ENCODE measurements at regions of chr17 and their contacts with region 1.

Region 1: DNA sequence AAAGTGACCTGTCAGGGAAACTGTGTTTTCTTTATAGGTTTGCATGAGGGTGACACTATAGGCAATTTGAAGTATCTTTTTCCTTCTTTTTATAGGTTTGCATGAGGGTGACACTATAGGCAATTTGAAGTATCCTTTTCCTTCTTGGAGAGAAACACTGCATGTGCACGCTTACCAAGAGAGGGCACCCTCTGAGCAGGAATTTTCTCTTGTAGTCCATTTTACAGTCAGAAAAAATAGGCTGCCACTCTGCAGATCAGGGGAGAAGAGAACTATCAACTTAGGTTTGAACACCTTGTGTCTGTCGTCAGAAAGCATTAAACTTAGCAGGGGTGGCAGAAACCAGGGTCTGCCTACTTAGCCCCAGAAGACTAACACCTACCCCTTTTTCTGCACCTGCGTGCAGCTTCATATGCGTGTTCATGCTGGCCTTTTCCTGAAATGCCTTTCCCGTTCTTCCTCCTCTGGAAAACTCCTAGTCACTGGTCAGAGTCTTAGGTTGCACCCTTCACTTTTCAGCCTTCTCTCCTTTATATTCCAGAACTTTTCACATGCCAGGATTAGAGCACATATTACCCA is 16.4 kb upstream of the SMIM36 start:
- DNase-seq: peak in 1 of 2 experiments; percentile 57
- H3K4me3 ChIP-seq: no peak overlapping the region
- H3K4me3 Mint-ChIP-seq: no peak overlapping the region
- H3K27ac Mint-ChIP-seq: no peak overlapping the region
- H3K4me1 ChIP-seq: 0 out of 2 replicates have a peak, but pooled peaks cover 5% of the 10 kb centered on the region
- H3K4me1 Mint-ChIP-seq: no peaks in the 10 kb centered on the region
- H3K27me3 ChIP-seq: no peaks in the 10 kb centered on the region; the same call in 1 of the 2 replicates
- H3K27me3 Mint-ChIP-seq: peaks cover 5% of the 10 kb centered on the region
- CTCF ChIP-seq: peak; percentile 43 to 68

Region 2: DNA sequence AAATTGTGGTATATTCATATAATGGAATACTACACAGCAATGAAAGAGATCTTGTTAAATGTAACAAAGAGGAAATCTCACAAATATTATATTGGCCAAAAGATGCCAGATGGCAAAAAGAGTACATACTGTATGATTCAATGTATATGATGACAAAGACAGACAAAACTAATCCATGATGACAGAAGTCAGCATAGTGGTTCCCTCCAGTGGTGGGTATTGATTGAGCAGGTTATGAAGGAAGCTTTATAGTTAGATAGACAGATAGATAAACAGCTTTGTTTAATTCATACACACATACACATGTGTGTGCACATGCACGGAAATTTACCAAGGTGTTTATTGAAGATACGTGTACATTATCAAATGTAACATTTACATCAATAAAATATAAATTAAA is 58.0 kb after region 1 on chr17:
- CTCF ChIA-PET with region 1: no interaction called
- POLR2A ChIA-PET with region 1: no interaction called
- intact Hi-C with region 1: loop called (anchors 1 kb)
- DNase-seq: no peak
- H3K4me3 ChIP-seq: no peak overlapping the region
- H3K4me3 Mint-ChIP-seq: no peak overlapping the region
- H3K27ac Mint-ChIP-seq: no peak overlapping the region
- H3K4me1 ChIP-seq: no peaks in the 10 kb centered on the region
- H3K4me1 Mint-ChIP-seq: no peaks in the 10 kb centered on the region
- H3K27me3 ChIP-seq: no peaks in the 10 kb centered on the region
- H3K27me3 Mint-ChIP-seq: peaks cover 13% of the 10 kb centered on the region
- CTCF ChIP-seq: no peak

Region 3: DNA sequence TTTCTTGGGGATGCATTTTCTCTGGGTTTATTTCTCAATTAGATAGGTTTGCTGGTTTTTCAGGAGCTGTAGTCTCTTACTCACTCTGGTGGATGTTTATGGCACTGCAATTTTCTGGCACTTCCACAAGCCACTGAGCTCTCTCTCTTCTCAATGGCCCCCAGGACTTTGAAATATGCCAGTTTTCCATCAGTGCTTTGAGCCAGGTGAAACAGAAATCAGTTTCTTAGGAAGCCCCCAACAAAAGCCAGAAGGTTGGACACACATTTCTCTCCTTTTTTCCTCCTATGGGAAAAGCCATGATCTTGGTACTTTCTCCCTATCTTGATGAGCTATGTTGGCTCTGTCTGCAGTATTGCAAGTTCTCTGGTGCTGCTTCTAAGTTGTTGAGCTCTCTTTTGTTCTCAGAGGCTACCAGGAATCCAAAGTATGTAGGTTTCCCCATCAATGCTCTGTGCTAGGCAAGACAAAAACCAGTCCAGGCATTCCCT is 74.3 kb after region 1 on chr17:
- CTCF ChIA-PET with region 1: interaction called, 13 read pairs
- POLR2A ChIA-PET with region 1: no interaction called
- intact Hi-C with region 1: loop called (anchors 1 kb)
- DNase-seq: peak in 1 of 2 experiments; percentile 51
- H3K4me3 ChIP-seq: no peak overlapping the region
- H3K4me3 Mint-ChIP-seq: no peak overlapping the region
- H3K27ac Mint-ChIP-seq: no peak overlapping the region
- H3K4me1 ChIP-seq: no peaks in the 10 kb centered on the region
- H3K4me1 Mint-ChIP-seq: no peaks in the 10 kb centered on the region
- H3K27me3 ChIP-seq: no peaks in the 10 kb centered on the region
- H3K27me3 Mint-ChIP-seq: peaks cover 4% of the 10 kb centered on the region
- CTCF ChIP-seq: peak; percentile 70 to 72

Region 4: DNA sequence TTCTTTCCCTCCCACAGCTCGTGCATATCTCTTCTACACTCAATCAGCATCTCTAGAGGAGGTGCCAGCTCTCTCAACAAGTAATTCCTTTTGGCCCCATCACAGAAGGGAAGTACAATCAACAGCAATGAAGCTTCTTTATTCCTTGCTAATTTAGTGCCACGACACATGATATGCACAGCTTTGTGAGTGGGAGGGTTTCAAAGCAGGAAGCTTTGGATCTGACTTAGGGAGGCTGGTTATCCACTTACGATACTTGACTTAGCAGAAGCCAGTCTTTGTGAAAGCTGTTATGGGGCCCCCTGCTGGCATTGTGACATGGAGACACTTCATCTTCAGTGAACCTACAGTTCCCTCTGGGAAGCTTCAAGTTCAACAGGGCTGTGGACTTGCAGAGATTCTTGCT is 114.0 kb after region 1 on chr17:
- CTCF ChIA-PET with region 1: interaction called, 6 read pairs
- POLR2A ChIA-PET with region 1: no interaction called
- intact Hi-C with region 1: loop called (anchors 1 kb)
- DNase-seq: peak; percentile 48 to 53
- H3K4me3 ChIP-seq: no peak overlapping the region
- H3K4me3 Mint-ChIP-seq: no peak overlapping the region
- H3K27ac Mint-ChIP-seq: no peak overlapping the region
- H3K4me1 ChIP-seq: no peaks in the 10 kb centered on the region; the same call in 1 of the 2 replicates
- H3K4me1 Mint-ChIP-seq: no peaks in the 10 kb centered on the region
- H3K27me3 ChIP-seq: no peaks in the 10 kb centered on the region
- H3K27me3 Mint-ChIP-seq: peaks cover 16% of the 10 kb centered on the region
- CTCF ChIP-seq: peak; percentile 60

Region 5: GRCh38 chr17:55717898-55718735 is 190.5 kb after region 1 on chr17:
- CTCF ChIA-PET with region 1: interaction called, 7 read pairs
- POLR2A ChIA-PET with region 1: no interaction called
- intact Hi-C with region 1: loop called (anchors 1 kb)
- DNase-seq: peak; percentile 69 to 79
- H3K4me3 ChIP-seq: no peak overlapping the region
- H3K4me3 Mint-ChIP-seq: no peak overlapping the region
- H3K27ac Mint-ChIP-seq: no peak overlapping the region
- H3K4me1 ChIP-seq: no peaks in the 10 kb centered on the region
- H3K4me1 Mint-ChIP-seq: no peaks in the 10 kb centered on the region
- H3K27me3 ChIP-seq: no peaks in the 10 kb centered on the region; the same call in 1 of the 2 replicates
- H3K27me3 Mint-ChIP-seq: peaks cover 20% of the 10 kb centered on the region
- CTCF ChIP-seq: peak; percentile 79 to 90

Region 6: GRCh38 chr17:55825213-55825612 is 297.6 kb after region 1 on chr17:
- CTCF ChIA-PET with region 1: no interaction called
- POLR2A ChIA-PET with region 1: no interaction called
- intact Hi-C with region 1: loop called (anchors 1 kb)
- DNase-seq: peak in 1 of 2 experiments; percentile 7
- H3K4me3 ChIP-seq: no peak overlapping the region
- H3K4me3 Mint-ChIP-seq: no peak overlapping the region
- H3K27ac Mint-ChIP-seq: no peak overlapping the region
- H3K4me1 ChIP-seq: no peaks in the 10 kb centered on the region
- H3K4me1 Mint-ChIP-seq: no peaks in the 10 kb centered on the region
- H3K27me3 ChIP-seq: no peaks in the 10 kb centered on the region
- H3K27me3 Mint-ChIP-seq: peaks cover 12% of the 10 kb centered on the region
- CTCF ChIP-seq: peak in 1 of 2 experiments; percentile 17

Region 7: DNA sequence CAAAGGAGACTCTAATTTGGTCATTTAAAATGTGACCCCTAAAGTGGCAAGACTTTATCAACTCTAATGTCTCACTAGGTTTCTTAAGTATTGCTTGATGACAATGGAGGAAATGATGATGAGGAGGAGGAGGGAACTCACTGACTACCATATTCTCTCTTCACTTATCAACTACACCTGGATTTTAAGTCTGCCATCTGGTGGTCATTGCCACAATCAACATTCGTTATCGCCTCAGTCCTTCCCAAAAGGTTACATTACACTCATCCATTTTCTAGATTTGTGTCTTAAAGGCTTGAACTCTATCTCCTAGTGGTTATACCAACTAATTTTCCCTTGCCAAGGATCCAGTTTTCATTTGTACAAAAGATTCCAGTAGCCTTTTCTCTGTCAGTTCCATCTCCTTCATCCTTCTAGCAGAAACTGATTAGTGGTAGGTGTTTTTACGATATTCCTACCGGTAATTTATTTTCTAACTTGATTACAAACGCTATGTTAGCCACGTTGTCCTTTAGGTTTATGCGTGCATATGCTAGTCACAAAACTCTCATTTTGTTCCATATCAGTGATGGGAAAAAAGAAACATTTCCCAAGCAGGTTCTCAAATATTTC is 951.3 kb after region 1 on chr17:
- CTCF ChIA-PET with region 1: no interaction called
- POLR2A ChIA-PET with region 1: no interaction called
- intact Hi-C with region 1: loop called (anchors 2 kb)
- DNase-seq: peak in 1 of 2 experiments; percentile 43
- H3K4me3 ChIP-seq: no peak overlapping the region
- H3K4me3 Mint-ChIP-seq: no peak overlapping the region
- H3K27ac Mint-ChIP-seq: no peak overlapping the region
- H3K4me1 ChIP-seq: no peaks in the 10 kb centered on the region
- H3K4me1 Mint-ChIP-seq: no peaks in the 10 kb centered on the region
- H3K27me3 ChIP-seq: no peaks in the 10 kb centered on the region
- H3K27me3 Mint-ChIP-seq: peaks cover 5% of the 10 kb centered on the region
- CTCF ChIP-seq: peak; percentile 65 to 74